Natural killer cell (primary cell): ENCODE measurements at regions of chr1 and their contacts with region 1.

Region 1: GRCh38 chr1:178532392-178532791 is 19.5 kb downstream of the TEX35 start:
- DNase-seq: peak; percentile 76 to 86
- ATAC-seq: peak; percentile 78 to 96 (median 85)
- H3K4me3 ChIP-seq: no peak overlapping the region
- H3K4me3 Mint-ChIP-seq: no peak overlapping the region
- H3K27ac ChIP-seq: no peak overlapping the region
- H3K27ac Mint-ChIP-seq: no peak overlapping the region
- H3K4me1 ChIP-seq: no peaks in the 10 kb centered on the region
- H3K4me1 Mint-ChIP-seq: peaks cover 5 to 6% of the 10 kb centered on the region in 2 donors
- H3K27me3 ChIP-seq: no peaks in the 10 kb centered on the region
- H3K27me3 Mint-ChIP-seq: peaks cover 0 to 3% of the 10 kb centered on the region in 2 donors
- CTCF ChIP-seq: peak; percentile 96

Region 2: DNA sequence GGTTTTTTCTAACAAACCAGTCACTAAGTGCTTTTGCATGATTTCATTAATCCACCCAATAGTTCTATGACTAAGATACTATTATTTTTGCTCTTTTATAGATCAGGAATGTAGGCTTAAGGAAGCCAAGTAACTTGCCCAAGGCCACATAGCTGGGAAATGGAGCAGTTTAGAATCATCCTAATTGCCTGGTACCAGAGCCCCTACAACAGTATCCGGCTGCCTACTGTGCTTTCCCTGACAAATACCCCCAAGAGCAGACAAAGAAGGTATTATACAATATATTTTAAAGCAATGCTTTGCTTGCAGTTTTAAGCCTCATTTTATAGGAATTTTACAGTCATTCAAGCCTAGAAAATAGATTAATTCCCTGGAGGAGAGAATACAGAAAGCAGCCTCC is 484.0 kb before region 1 on chr1:
- intact Hi-C with region 1: no loop called
- DNase-seq: no peak
- ATAC-seq: no peak
- H3K4me3 ChIP-seq: no peak overlapping the region
- H3K4me3 Mint-ChIP-seq: no peak overlapping the region
- H3K27ac ChIP-seq: no peak overlapping the region
- H3K27ac Mint-ChIP-seq: no peak overlapping the region
- H3K4me1 ChIP-seq: no peaks in the 10 kb centered on the region
- H3K4me1 Mint-ChIP-seq: no peaks in the 10 kb centered on the region
- H3K27me3 ChIP-seq: no peaks in the 10 kb centered on the region
- H3K27me3 Mint-ChIP-seq: no peaks in the 10 kb centered on the region
- CTCF ChIP-seq: no peak

Region 3: DNA sequence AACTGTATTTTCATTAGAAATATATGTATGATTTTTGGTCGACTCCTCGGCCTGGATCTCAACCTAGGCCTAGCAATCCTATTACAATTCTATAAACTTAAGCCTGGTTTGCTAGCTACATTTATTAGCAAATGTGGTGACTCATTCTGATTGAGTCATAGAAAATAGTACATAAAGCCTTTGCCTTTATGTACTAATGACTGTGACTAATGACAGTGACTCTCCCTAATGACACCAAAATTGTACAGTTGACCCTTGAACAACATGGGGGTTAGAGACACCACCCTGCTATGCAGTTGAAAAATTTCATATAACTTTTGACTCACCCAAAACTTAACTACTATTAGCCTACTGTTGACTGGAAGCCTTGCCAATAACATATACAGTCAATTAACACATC is 114.5 kb before region 1 on chr1:
- intact Hi-C with region 1: no loop called
- DNase-seq: no peak
- ATAC-seq: no peak
- H3K4me3 ChIP-seq: no peak overlapping the region
- H3K4me3 Mint-ChIP-seq: no peak overlapping the region
- H3K27ac ChIP-seq: no peak overlapping the region
- H3K27ac Mint-ChIP-seq: no peak overlapping the region
- H3K4me1 ChIP-seq: no peaks in the 10 kb centered on the region
- H3K4me1 Mint-ChIP-seq: no peaks in the 10 kb centered on the region
- H3K27me3 ChIP-seq: no peaks in the 10 kb centered on the region
- H3K27me3 Mint-ChIP-seq: peaks cover 0 to 6% of the 10 kb centered on the region in 2 donors
- CTCF ChIP-seq: no peak

Region 4: DNA sequence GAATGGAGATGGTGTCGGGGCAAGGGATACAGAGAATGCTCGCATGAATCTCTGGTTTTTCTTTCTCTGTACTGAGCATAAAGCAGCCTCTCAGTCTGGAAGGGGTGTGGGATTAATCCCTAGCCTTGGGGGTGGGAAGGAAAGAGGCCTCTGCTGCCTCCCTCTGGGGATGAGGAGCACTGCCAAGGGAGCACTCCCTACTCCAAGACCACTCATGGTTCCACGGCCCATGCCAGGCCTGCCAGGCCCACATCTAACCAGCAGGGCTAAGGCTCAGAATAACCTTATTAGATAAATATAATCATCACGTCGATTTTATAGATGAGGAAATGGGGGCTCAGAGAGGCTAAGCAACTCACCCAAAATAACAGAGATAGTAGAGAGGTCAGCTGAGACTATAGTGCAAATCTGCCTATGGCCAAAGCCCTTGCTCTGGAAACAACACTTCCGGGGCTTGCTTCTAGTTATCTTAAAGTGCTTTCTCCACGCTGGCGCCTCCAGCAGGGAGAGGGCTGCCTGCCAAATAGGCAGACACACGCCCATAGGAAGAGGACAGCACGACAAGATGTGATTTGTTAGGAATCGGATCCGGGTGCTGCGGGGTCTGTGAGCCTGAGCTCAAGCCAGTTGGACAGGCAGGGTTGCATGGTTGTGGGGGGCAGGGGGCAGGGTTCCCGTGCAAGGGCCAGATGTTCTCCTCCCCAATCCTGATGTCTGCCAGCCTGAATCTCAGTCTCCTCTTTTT is 18.9 kb before region 1 on chr1:
- intact Hi-C with region 1: no loop called
- DNase-seq: no peak
- ATAC-seq: no peak
- H3K4me3 ChIP-seq: no peak overlapping the region
- H3K4me3 Mint-ChIP-seq: no peak overlapping the region
- H3K27ac ChIP-seq: no peak overlapping the region
- H3K27ac Mint-ChIP-seq: no peak overlapping the region
- H3K4me1 ChIP-seq: no peaks in the 10 kb centered on the region
- H3K4me1 Mint-ChIP-seq: no peaks in the 10 kb centered on the region
- H3K27me3 ChIP-seq: no peaks in the 10 kb centered on the region
- H3K27me3 Mint-ChIP-seq: peaks cover 1 to 3% of the 10 kb centered on the region in 2 donors
- CTCF ChIP-seq: no peak

Region 5: DNA sequence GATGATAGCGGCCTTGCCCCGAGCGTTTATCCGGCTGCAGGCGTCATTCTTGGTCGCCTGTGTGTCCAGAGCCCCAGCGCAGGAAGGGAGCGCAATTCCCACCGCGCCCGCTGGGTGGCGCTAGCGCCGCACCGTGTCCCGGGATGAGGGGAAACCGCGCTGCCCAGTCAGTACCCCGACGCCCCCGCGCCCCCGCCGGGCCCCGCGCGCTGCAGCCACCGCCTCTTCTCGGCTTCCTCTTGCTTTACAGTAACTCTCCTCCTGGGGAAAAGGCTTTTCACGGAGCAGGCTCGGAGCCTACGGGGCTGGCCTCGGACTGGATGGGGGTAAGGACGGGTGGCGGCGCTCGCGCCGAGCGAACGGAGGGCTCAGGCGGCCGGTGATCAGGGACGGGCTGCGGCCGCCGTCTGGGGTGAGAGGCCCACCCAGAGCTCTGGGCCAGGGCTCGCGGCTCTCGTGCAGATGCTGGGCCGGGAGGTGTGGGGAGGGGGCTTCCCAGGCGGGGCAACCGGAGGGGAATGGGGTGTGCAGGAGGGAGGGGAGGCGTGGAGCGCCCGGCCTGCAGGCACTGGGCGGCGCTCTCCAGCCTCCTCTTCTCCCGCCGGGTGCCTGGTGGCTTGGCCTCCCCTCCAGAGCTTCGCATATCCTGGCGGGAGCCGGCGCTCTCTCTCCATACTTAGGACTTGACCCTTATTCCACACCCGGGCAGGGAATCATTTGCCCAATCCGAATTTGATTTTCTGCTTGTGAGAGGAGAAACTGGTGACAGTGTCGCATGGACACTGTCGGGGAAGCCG is 10.4 kb after region 1 on chr1:
- intact Hi-C with region 1: loop called (anchors 1 kb)
- DNase-seq: peak; percentile 88 to 94
- ATAC-seq: peak; percentile 94 to 97 (median 95)
- H3K4me3 ChIP-seq: peak overlapping the region; percentile 82
- H3K4me3 Mint-ChIP-seq: peak overlapping the region; percentile 95
- H3K27ac ChIP-seq: peak overlapping the region; percentile 34
- H3K27ac Mint-ChIP-seq: peak overlapping the region in 1 of 2 donors; percentile 86
- H3K4me1 ChIP-seq: peaks cover 15% of the 10 kb centered on the region
- H3K4me1 Mint-ChIP-seq: peaks cover 0 to 22% of the 10 kb centered on the region in 2 donors
- H3K27me3 ChIP-seq: no peaks in the 10 kb centered on the region
- H3K27me3 Mint-ChIP-seq: peaks cover 0 to 3% of the 10 kb centered on the region in 2 donors
- CTCF ChIP-seq: peak; percentile 99

Region 6: GRCh38 chr1:178752891-178753290 is 220.5 kb after region 1 on chr1:
- intact Hi-C with region 1: loop called (anchors 1 kb)
- DNase-seq: no peak
- ATAC-seq: no peak
- H3K4me3 ChIP-seq: no peak overlapping the region
- H3K4me3 Mint-ChIP-seq: no peak overlapping the region
- H3K27ac ChIP-seq: no peak overlapping the region
- H3K27ac Mint-ChIP-seq: no peak overlapping the region
- H3K4me1 ChIP-seq: no peaks in the 10 kb centered on the region
- H3K4me1 Mint-ChIP-seq: no peaks in the 10 kb centered on the region
- H3K27me3 ChIP-seq: no peaks in the 10 kb centered on the region
- H3K27me3 Mint-ChIP-seq: no peaks in the 10 kb centered on the region
- CTCF ChIP-seq: no peak

Region 7: DNA sequence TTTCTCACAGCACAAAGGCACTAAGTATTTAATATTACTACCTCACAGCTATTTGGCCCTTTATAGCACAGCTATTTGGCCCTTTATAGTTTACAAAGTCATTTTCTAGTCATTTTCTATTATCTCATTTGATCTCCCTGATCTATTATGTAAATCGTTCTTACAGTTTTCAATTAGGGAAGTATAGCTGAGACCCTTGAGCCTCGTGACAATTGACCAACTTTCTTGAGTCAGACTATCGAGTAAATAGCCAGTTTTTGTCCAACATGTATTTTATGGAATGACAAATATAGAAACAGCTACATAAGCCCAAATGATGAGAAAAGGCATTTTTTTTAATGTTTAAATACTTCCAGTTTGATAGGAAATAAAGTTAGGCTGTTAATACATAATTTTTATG is 345.5 kb after region 1 on chr1:
- intact Hi-C with region 1: no loop called
- DNase-seq: no peak
- ATAC-seq: no peak
- H3K4me3 ChIP-seq: no peak overlapping the region
- H3K4me3 Mint-ChIP-seq: no peak overlapping the region
- H3K27ac ChIP-seq: no peak overlapping the region
- H3K27ac Mint-ChIP-seq: no peak overlapping the region
- H3K4me1 ChIP-seq: no peaks in the 10 kb centered on the region
- H3K4me1 Mint-ChIP-seq: no peaks in the 10 kb centered on the region
- H3K27me3 ChIP-seq: no peaks in the 10 kb centered on the region
- H3K27me3 Mint-ChIP-seq: no peaks in the 10 kb centered on the region
- CTCF ChIP-seq: no peak

Region 8: DNA sequence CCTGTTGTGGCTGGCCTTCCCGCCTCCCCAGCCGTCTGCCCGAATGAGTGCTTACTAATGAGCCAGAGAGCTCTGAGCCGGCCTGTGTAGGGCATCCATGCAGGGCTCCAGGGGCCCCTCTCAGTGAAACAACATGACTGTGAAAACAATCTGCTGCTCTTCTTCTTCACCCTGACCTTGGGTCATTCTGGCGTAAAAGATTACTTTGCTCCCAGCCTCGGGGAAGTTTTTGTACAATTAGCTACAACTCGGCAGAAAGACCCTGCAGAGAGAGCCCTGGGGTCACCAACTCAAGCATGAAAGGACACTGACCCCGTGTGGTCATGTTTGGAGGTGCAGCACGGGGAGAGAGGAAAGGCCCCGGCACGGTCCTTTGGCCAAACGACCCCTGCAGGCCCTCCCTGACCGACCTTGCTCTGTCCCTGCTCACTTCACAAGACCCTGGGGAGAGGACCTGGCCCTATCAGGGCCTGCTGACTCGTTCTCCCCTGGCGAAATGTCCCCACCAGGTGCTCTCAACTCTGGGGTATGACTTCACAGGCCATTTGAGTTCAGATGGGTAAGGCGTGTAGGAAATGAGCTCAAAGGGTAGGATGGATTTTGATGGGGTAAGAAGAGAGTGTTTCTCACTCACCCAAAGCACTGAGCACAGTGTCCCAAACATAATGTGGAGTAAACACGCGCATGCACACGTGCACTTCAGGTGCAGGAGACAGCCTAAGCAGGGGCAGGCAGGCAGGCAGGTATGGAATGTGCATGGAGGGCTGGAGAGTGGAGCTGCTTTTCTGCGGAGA is 470.4 kb after region 1 on chr1:
- intact Hi-C with region 1: loop called (anchors 1 kb)
- DNase-seq: peak; percentile 65 to 78
- ATAC-seq: peak; percentile 69 to 89 (median 83)
- H3K4me3 ChIP-seq: no peak overlapping the region
- H3K4me3 Mint-ChIP-seq: no peak overlapping the region
- H3K27ac ChIP-seq: no peak overlapping the region
- H3K27ac Mint-ChIP-seq: peak overlapping the region; percentile 83 to 88
- H3K4me1 ChIP-seq: peaks cover 27% of the 10 kb centered on the region
- H3K4me1 Mint-ChIP-seq: peaks cover 18 to 22% of the 10 kb centered on the region in 2 donors
- H3K27me3 ChIP-seq: no peaks in the 10 kb centered on the region
- H3K27me3 Mint-ChIP-seq: no peaks in the 10 kb centered on the region
- CTCF ChIP-seq: peak; percentile 88